SK-N-SH (cell line): ENCODE measurements at regions of chr12 and their contacts with region 1.

Region 1: GRCh38 chr12:49800421-49801140 is 27.6 kb downstream of the NCKAP5L start:
- DNase-seq: no peak
- H3K4me3 ChIP-seq: no peak overlapping the region
- H3K27ac ChIP-seq: no peak overlapping the region
- H3K4me1 ChIP-seq: no peaks in the 10 kb centered on the region
- H3K27me3 ChIP-seq: no peaks in the 10 kb centered on the region
- CTCF ChIP-seq: no peak
- EP300 ChIP-seq: no peak
- RAD21 ChIP-seq: no peak

Region 2: DNA sequence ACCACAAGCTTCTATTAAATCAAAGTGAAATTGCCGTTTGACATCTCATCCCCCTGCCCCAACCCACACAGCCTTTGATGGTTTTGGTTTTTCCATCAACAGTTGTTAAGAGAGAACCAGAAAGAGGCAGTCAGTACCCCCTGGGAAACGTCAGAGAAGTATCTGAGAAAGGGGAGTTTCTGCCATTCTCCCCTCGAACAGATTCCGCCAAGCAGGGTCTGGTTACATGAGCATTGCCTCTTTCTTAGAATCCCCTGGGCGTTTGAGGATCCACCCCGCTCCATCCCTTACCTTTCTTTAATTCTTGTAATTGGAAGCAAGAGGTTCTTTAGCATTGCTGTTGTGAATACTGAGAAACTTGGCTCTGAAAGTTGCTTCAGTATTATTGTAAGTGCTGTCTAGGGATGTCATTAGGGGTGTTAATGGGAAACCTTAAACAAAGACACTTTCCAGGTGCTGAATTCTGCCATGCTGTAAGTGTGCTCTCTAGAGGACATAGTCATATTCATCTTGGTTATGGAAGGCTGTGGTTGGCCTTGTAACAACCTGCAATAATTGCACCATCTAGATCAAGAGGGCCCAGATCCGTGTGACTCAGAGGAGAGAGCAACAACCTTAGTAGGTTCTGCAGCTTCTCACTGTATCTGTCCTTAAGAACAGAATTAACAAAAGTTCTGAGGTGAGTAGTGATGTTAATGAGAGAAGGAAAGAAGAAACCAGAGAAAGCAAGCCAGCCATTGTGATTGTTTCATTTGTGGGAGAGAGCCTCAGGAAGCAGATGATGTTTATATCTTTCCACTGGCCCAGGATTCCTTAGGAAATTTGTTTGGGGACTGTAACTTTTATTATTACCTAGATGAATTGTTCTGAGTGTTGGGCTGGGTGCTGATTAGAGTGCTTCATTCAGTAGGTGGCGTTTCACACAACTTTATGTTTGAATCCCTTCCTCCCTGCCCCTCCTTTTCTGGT is 50.3 kb before region 1 on chr12:
- CTCF ChIA-PET with region 1: no interaction called
- POLR2A ChIA-PET with region 1: no interaction called
- DNase-seq: no peak
- H3K4me3 ChIP-seq: no peak overlapping the region
- H3K27ac ChIP-seq: no peak overlapping the region; a peak in 1 of 4 replicates
- H3K4me1 ChIP-seq: peaks cover 2 to 11% of the 10 kb centered on the region in 2 experiments; a peak in 2 of 4 replicates
- H3K27me3 ChIP-seq: no peaks in the 10 kb centered on the region
- CTCF ChIP-seq: no peak
- EP300 ChIP-seq: no peak
- RAD21 ChIP-seq: no peak

Region 3: GRCh38 chr12:49776413-49776812 is 24.2 kb before region 1 on chr12:
- CTCF ChIA-PET with region 1: interaction called, 12 read pairs
- POLR2A ChIA-PET with region 1: no interaction called
- DNase-seq: peak; percentile 79
- H3K4me3 ChIP-seq: peak overlapping the region in 1 of 2 experiments; percentile 9; a peak in 1 of 4 replicates
- H3K27ac ChIP-seq: no peak overlapping the region
- H3K4me1 ChIP-seq: no peaks in the 10 kb centered on the region
- H3K27me3 ChIP-seq: no peaks in the 10 kb centered on the region
- CTCF ChIP-seq: peak; percentile 84
- EP300 ChIP-seq: no peak
- RAD21 ChIP-seq: peak; percentile 91

Region 4: GRCh38 chr12:49818241-49818895 is 17.8 kb after region 1 on chr12:
- CTCF ChIA-PET with region 1: no interaction called
- POLR2A ChIA-PET with region 1: no interaction called
- DNase-seq: no peak
- H3K4me3 ChIP-seq: no peak overlapping the region
- H3K27ac ChIP-seq: no peak overlapping the region
- H3K4me1 ChIP-seq: peaks cover 0 to 2% of the 10 kb centered on the region in 2 experiments; a peak in 1 of 4 replicates
- H3K27me3 ChIP-seq: no peaks in the 10 kb centered on the region
- CTCF ChIP-seq: no peak
- EP300 ChIP-seq: no peak
- RAD21 ChIP-seq: no peak